ENCODE measurements at regions of chr18 and their contacts with region 1.

Region 1: DNA sequence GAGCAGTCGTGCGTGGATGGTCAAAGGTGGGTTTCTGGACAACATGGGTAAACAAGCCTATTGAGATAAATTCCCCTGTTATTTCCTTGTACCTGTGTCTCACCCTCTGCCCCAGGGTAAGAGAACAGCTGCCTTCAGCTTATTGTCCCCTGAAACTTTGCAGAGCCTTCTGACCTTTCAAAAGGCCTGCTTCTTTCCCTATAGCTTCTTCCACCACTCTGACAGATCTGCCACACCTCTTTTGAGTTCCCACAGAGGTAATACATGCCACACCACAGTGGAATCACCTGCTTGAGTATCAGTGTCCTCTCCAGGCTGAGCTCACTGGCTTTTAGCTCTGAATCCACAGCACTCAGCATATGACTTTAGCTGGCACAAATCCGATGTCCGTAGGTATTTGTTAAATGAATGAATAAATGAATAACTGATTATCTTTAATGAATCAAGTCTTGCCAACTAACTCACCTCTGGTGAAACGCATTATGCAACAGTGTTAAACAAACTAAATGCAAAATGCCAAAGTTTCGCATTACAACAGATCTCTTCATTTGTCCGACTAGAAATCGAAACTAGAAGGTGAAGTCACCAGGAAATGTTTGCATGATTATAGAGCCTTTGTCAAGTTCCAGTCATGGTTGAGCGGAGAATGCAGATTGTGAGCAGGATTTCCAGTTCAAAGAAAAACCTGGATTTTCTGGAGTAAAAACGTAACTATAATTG is 16.3 kb downstream of the DYNAP start:
- DNase-seq: peak; percentile 58
- ATAC-seq: peak; percentile 87
- H3K4me3 ChIP-seq: peak overlapping the region; percentile 53 to 62 (median 56); a peak in 5 of 6 replicates
- H3K27ac ChIP-seq: no peak overlapping the region
- H3K4me1 ChIP-seq: peaks cover 11% of the 10 kb centered on the region
- H3K27me3 ChIP-seq: no peaks in the 10 kb centered on the region
- CTCF ChIP-seq: no peak
- EP300 ChIP-seq: no peak
- POLR2A ChIP-seq: no peak
- RAD21 ChIP-seq: no peak

Region 2: DNA sequence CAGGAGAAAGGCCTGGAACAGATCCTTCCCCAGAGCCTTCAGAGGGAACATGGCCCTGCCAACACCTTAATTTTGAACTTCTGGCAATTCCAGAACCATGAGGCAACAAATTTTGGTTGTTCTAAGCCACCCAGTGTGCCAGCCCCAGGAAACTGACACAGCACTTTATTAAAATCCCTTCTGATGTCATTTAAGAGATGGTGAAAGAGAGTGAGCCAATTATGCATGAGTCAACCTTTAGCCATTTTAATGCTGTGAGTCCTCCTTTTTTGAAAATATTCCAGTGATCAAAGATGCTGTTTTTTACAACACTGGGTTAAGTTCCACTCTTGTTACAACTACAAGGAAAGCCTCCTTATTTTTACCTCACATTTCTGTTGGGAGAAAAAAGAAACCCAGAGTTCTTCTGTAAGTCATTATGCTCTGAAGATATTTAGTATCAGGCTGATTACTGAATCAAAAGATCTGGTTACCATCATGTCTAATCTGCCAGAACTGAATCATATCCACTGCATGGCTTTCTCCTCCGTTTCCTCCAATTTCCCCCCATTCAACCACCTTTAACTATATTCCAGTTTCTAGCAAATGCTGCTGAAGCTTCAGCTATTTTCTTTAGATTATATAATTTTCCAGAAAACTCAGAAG is 1795.6 kb after region 1 on chr18:
- CTCF ChIA-PET with region 1: no interaction called
- POLR2A ChIA-PET with region 1: no interaction called
- in situ Hi-C with region 1: no loop called
- intact Hi-C with region 1: loop called (anchors 5 kb)
- DNase-seq: no peak
- ATAC-seq: no peak
- H3K4me3 ChIP-seq: no peak overlapping the region
- H3K27ac ChIP-seq: no peak overlapping the region
- H3K4me1 ChIP-seq: no peaks in the 10 kb centered on the region
- H3K27me3 ChIP-seq: no peaks in the 10 kb centered on the region
- CTCF ChIP-seq: no peak
- EP300 ChIP-seq: no peak
- POLR2A ChIP-seq: no peak
- RAD21 ChIP-seq: no peak

Measured in HepG2 (cell line).